ENCODE measurements at regions of chr2 and their contacts with region 1.

Region 1: DNA sequence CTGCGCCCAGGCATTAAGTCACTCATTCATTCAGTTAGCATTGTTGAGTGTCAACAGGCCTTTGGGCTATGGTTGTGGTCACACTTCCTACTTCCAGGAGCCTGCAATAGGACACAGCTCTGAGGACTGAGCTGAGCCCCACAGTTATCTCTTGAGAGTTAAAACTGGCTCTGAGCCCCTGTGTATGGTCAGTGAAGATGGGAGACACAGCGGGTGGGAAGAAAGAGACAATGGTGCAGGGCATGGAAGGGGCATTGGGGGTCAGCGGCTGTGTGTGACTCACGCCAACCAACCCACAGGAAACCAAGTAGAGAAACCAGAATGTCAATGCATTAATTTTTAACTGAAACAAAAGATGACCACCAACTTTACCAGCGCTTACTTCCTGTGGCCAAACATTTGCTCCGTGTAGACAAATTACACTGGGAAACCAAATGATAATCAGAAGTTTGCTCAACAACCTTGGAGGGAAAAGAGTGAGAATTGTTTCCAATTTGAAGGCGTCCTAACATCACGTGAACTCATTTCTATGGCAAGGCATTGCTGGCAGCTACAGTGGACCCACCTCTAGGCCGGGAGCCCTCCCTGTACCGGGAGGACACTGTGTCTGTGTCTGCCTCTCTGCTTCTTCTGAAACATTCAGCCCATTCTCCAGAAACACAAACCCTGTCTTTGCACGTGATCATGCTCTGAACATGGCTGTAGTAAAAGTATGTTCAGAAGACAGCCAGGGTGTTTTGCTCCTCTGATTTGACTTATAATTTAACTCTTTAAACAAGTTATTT is 212.0 kb upstream of the ID2 start:
- DNase-seq: peak; percentile 70
- H3K4me3 Mint-ChIP-seq: peak overlapping the region; percentile 42
- H3K27ac Mint-ChIP-seq: peak overlapping the region; percentile 96
- H3K4me1 Mint-ChIP-seq: peaks cover 71% of the 10 kb centered on the region
- H3K27me3 Mint-ChIP-seq: no peaks in the 10 kb centered on the region
- CTCF ChIP-seq: no peak

Region 2: GRCh38 chr2:8456151-8456845 is 13.6 kb before region 1 on chr2:
- CTCF ChIA-PET with region 1: no interaction called
- intact Hi-C with region 1: loop called (anchors 2 kb)
- DNase-seq: no peak
- H3K4me3 Mint-ChIP-seq: peak overlapping the region; percentile 61
- H3K27ac Mint-ChIP-seq: no peak overlapping the region
- H3K4me1 Mint-ChIP-seq: peaks cover 47% of the 10 kb centered on the region
- H3K27me3 Mint-ChIP-seq: no peaks in the 10 kb centered on the region
- CTCF ChIP-seq: no peak

Region 3: GRCh38 chr2:8484502-8485283 is 14.8 kb after region 1 on chr2:
- CTCF ChIA-PET with region 1: no interaction called
- intact Hi-C with region 1: no loop called
- DNase-seq: no peak
- H3K4me3 Mint-ChIP-seq: no peak overlapping the region
- H3K27ac Mint-ChIP-seq: no peak overlapping the region
- H3K4me1 Mint-ChIP-seq: peaks cover 27% of the 10 kb centered on the region
- H3K27me3 Mint-ChIP-seq: no peaks in the 10 kb centered on the region
- CTCF ChIP-seq: no peak

Region 4: DNA sequence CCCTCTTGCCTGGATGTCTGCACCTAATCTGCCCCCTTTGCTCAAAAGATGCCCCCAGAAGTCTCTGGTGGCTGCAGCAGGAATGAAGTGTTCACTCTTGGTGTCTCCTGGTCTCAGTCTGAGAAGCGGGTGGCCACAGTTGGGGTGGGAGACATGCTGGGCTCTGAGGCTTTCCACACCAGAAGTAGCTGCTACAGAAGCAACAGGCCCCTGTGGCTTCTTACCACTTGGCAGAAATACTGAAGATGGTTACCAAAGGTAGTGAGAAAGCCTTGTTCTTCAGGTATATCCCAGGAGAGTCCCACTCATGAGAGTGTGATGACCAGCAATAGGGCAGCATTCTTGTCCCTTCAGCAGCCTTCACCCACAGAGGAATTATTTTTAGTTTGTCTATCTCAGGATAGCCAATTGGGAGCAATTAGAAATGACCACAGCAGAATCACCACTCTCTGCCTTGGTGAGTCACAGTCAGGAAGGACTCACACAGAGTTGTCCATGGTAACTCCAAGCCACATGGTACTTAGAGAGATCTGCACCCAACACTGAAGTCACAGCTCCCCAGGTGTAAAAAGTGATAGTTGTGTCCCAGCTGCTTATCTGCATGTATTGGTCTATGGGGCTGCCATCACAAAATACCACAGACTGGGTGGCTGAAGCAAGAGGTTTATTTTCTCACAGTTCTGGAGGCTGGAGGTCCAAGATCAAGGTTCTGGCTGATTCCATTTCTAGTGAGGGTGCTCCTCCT is 42.1 kb after region 1 on chr2:
- CTCF ChIA-PET with region 1: no interaction called
- intact Hi-C with region 1: no loop called
- DNase-seq: no peak
- H3K4me3 Mint-ChIP-seq: no peak overlapping the region
- H3K27ac Mint-ChIP-seq: no peak overlapping the region
- H3K4me1 Mint-ChIP-seq: no peaks in the 10 kb centered on the region
- H3K27me3 Mint-ChIP-seq: no peaks in the 10 kb centered on the region
- CTCF ChIP-seq: no peak

Measured in Calu3 (cell line).